K562 (cell line): ENCODE measurements at regions of chr11 and their contacts with region 1.

Region 1: DNA sequence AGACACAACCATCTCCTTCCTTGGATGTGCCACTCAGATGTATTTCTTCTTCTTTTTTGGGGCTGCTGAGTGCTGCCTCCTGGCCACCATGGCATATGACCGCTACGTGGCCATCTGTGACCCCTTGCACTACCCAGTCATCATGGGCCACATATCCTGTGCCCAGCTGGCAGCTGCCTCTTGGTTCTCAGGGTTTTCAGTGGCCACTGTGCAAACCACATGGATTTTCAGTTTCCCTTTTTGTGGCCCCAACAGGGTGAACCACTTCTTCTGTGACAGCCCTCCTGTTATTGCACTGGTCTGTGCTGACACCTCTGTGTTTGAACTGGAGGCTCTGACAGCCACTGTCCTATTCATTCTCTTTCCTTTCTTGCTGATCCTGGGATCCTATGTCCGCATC is 489 bp downstream of the OR10A4 start:
- DNase-seq: no peak
- ATAC-seq: no peak
- H3K4me3 ChIP-seq: no peak overlapping the region
- H3K27ac ChIP-seq: no peak overlapping the region
- H3K4me1 ChIP-seq: no peaks in the 10 kb centered on the region
- H3K27me3 ChIP-seq: 0 out of 5 replicates have a peak, but pooled peaks cover 0 to 6% of the 10 kb centered on the region in 2 experiments
- CTCF ChIP-seq: no peak
- EP300 ChIP-seq: no peak
- POLR2A ChIP-seq: no peak
- RAD21 ChIP-seq: no peak

Region 2: GRCh38 chr11:6862961-6863360 is 14.0 kb before region 1 on chr11 and contains the start of gene OR10A2:
- CTCF ChIA-PET with region 1: no interaction called
- POLR2A ChIA-PET with region 1: interaction called, 10 read pairs
- in situ Hi-C with region 1: no loop called
- intact Hi-C with region 1: no loop called
- DNase-seq: no peak
- ATAC-seq: peak; percentile 32; the same call in 1 of the 3 replicates
- H3K4me3 ChIP-seq: no peak within 1 kb of the TSS
- H3K27ac ChIP-seq: no peak within 1 kb of the TSS
- H3K4me1 ChIP-seq: no peaks in the 10 kb centered on the region
- H3K27me3 ChIP-seq: no peaks in the 10 kb centered on the region
- CTCF ChIP-seq: no peak
- EP300 ChIP-seq: no peak
- POLR2A ChIP-seq: no peak
- RAD21 ChIP-seq: no peak
- polyA plus RNA-seq, gene OR10A2: 0.10 TPM in 1 of 2 experiments, not detected in the other

Region 3: GRCh38 chr11:7251836-7252682 is 375.1 kb after region 1 on chr11 and contains the start of gene SYT9:
- CTCF ChIA-PET with region 1: no interaction called
- POLR2A ChIA-PET with region 1: no interaction called
- in situ Hi-C with region 1: no loop called
- intact Hi-C with region 1: no loop called
- DNase-seq: peak; percentile 16 to 24 (median 20)
- ATAC-seq: peak; percentile 90
- H3K4me3 ChIP-seq: no peak within 1 kb of the TSS
- H3K27ac ChIP-seq: no peak within 1 kb of the TSS
- H3K4me1 ChIP-seq: peaks cover 0 to 16% of the 10 kb centered on the region in 2 experiments; a peak in 2 of 5 replicates
- H3K27me3 ChIP-seq: peaks cover 11 to 25% of the 10 kb centered on the region in 2 experiments; a peak in 4 of 5 replicates
- CTCF ChIP-seq: no peak
- EP300 ChIP-seq: no peak
- POLR2A ChIP-seq: no peak
- RAD21 ChIP-seq: no peak
- polyA plus RNA-seq, gene SYT9: 0.01 TPM in 1 of 2 experiments, not detected in the other